Activated CD8-positive, alpha-beta T cell treated with anti-CD3 and anti-CD28 coated beads, Interleukin-2, amount 10 ng/mL, durations not matched to agents 7 days and 5 days (primary cell): ENCODE measurements at regions of chr1 and their contacts with region 1.

Region 1: GRCh38 chr1:160354388-160354985 is 11.3 kb downstream of the NCSTN start:
- DNase-seq: peak; percentile 30
- ATAC-seq: peak; percentile 61
- H3K4me3 Mint-ChIP-seq: no peak overlapping the region
- H3K27ac Mint-ChIP-seq: no peak overlapping the region
- H3K4me1 Mint-ChIP-seq: no peaks in the 10 kb centered on the region
- H3K27me3 Mint-ChIP-seq: no peaks in the 10 kb centered on the region

Region 2: DNA sequence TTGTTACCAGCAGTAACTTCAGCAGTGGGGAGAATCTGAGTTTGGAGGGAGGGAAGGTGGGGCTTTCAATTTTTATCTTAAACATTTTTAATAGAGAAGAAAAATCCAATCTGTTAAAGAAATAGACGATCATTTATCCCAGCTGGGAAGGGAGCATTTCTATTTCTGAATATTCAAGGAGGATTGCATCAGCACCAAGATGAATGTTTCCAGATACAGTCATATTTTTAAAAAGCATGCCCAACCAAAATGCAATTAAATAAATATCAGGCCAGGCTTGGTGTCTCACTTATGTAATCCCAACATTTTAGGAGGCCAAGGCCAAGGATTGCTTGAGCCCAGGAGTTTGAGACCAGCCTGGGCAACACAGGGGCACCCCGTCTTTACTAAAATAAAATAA is 204.8 kb before region 1 on chr1:
- CTCF ChIA-PET with region 1: no interaction called
- POLR2A ChIA-PET with region 1: no interaction called
- DNase-seq: no peak
- ATAC-seq: no peak
- H3K4me3 Mint-ChIP-seq: no peak overlapping the region
- H3K27ac Mint-ChIP-seq: no peak overlapping the region
- H3K4me1 Mint-ChIP-seq: no peaks in the 10 kb centered on the region
- H3K27me3 Mint-ChIP-seq: peaks cover 2% of the 10 kb centered on the region

Region 3: GRCh38 chr1:160342953-160343869 is 11.3 kb before region 1 on chr1 and contains the starts of genes COPA and NCSTN:
- CTCF ChIA-PET with region 1: interaction called, 23 read pairs
- POLR2A ChIA-PET with region 1: interaction called, 4 read pairs
- DNase-seq: peak; percentile 95
- ATAC-seq: peak; percentile 98
- H3K4me3 Mint-ChIP-seq: peak within 1 kb of the TSS; percentile 100
- H3K27ac Mint-ChIP-seq: peak within 1 kb of the TSS; percentile 100
- H3K4me1 Mint-ChIP-seq: peaks cover 58% of the 10 kb centered on the region
- H3K27me3 Mint-ChIP-seq: no peaks in the 10 kb centered on the region
- total RNA-seq, gene COPA: 121 to 128 TPM
- total RNA-seq, gene NCSTN: 52.7 to 59.7 TPM

Region 4: GRCh38 chr1:160590488-160590887 is 236.0 kb after region 1 on chr1:
- CTCF ChIA-PET with region 1: no interaction called
- POLR2A ChIA-PET with region 1: no interaction called
- DNase-seq: no peak
- ATAC-seq: no peak
- H3K4me3 Mint-ChIP-seq: no peak overlapping the region
- H3K27ac Mint-ChIP-seq: no peak overlapping the region
- H3K4me1 Mint-ChIP-seq: peaks cover 5% of the 10 kb centered on the region
- H3K27me3 Mint-ChIP-seq: no peaks in the 10 kb centered on the region